Activated T-helper 1 cell treated with anti-CD3 and anti-CD28 coated beads, Interleukin-12 subunit alpha, Interleukin-12 subunit beta, Interleukin-2, Interleukin-4 antibody, amounts not matched to agents 30 ng/mL and 10 ng/mL and 1 ng/mL, durations not matched to agents 14 hours and 24 hours and 36 hours (primary cell): ENCODE measurements at regions of chr15 and their contacts with region 1.

Region 1: DNA sequence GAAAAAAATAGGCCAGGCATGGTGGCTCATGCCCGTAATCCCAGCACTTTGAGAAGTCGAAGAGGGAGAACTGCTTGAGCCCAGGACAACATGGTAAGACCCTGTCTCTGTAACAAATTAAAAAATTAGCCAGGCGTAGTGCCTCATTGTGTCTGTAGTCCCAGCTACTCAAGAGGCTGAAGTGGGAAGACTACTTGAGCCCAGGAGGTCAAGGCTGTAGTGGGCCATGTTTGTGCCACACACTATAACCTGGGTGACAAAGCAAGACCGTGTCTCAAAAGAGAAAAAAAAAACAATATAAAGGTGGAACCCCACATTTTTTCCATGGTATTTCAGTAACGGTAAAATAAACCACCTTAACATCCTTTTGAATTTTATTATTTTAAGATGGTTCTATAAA is 69.9 kb downstream of the DENND4A start:
- DNase-seq: no peak
- H3K4me3 Mint-ChIP-seq: no peak overlapping the region
- H3K27ac Mint-ChIP-seq: no peak overlapping the region
- H3K4me1 Mint-ChIP-seq: no peaks in the 10 kb centered on the region
- H3K27me3 Mint-ChIP-seq: no peaks in the 10 kb centered on the region

Region 2: GRCh38 chr15:64361259-64361658 is 1360.9 kb before region 1 on chr15:
- intact Hi-C with region 1: no loop called
- DNase-seq: no peak
- H3K4me3 Mint-ChIP-seq: no peak overlapping the region
- H3K27ac Mint-ChIP-seq: no peak overlapping the region
- H3K4me1 Mint-ChIP-seq: peaks cover 6% of the 10 kb centered on the region
- H3K27me3 Mint-ChIP-seq: no peaks in the 10 kb centered on the region

Region 3: GRCh38 chr15:65773386-65774111 is 51.4 kb after region 1 on chr15:
- intact Hi-C with region 1: loop called (anchors 1 kb)
- DNase-seq: no peak
- H3K4me3 Mint-ChIP-seq: peak overlapping the region; percentile 15
- H3K27ac Mint-ChIP-seq: peak overlapping the region; percentile 74
- H3K4me1 Mint-ChIP-seq: peaks cover 40% of the 10 kb centered on the region
- H3K27me3 Mint-ChIP-seq: no peaks in the 10 kb centered on the region

Region 4: DNA sequence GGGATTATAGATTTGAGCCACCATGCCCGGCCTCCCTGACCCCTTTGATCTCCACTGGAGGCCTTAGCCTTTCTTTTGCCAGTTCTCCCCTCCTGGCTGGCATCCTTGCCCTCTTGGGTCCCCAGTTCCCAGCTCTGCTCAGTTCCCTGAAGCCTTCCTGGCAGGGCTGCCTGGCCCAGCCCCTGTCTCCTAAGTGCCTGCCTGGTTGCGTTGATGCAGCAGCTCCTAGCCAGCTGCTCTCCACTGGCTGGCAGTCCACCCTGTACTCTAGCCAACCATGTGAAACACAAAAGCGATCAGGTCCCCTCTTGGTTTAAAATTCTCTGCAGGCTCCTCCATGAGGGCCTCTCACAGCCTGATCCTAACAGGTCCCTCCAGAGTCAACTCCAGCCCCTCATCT is 331.8 kb after region 1 on chr15:
- intact Hi-C with region 1: no loop called
- DNase-seq: no peak
- H3K4me3 Mint-ChIP-seq: no peak overlapping the region
- H3K27ac Mint-ChIP-seq: no peak overlapping the region
- H3K4me1 Mint-ChIP-seq: no peaks in the 10 kb centered on the region
- H3K27me3 Mint-ChIP-seq: peaks cover 13% of the 10 kb centered on the region